Heart left ventricle (tissue), 16 donors: ENCODE measurements at regions of chr21 and their contacts with region 1.

Region 1: GRCh38 chr21:35051287-35051818 is 2.3 kb upstream of the RUNX1 start:
- DNase-seq: peak; percentile 82 to 91 (median 86)
- ATAC-seq: peak; percentile 86 to 94 (median 91)
- H3K4me3 ChIP-seq: no peak overlapping the region
- H3K27ac ChIP-seq: peak overlapping the region in 7 of 12 donors; percentile 13 to 76 (median 37)
- H3K4me1 ChIP-seq: peaks cover 0 to 47% (median 12%) of the 10 kb centered on the region in 12 donors
- H3K27me3 ChIP-seq: peaks cover 0 to under 1% (median 0%) of the 10 kb centered on the region in 9 donors
- CTCF ChIP-seq: peak in 11 of 12 donors; percentile 43 to 71 (median 60)
- POLR2A ChIP-seq: no peak

Region 2: DNA sequence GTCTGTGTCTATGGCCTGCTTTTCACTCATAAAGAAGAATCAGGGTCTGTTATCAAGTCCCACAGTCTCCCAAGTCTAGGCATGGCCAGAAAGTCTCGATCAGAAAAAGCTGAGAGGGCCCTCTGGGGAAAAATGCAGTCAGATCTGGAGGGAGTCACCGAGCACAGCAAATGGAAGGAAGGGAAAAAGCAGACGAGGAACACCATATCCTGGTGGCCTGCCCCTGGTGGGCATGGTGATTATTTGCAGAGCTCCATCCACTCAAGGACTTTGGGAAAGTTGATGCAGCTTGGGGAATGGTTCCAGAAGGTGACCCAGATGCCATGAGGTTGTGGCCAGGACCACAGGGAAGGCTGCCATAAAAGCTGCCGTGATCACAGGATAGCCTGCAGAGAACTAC is 193.5 kb before region 1 on chr21:
- intact Hi-C with region 1: no loop called
- DNase-seq: no peak
- ATAC-seq: no peak
- H3K4me3 ChIP-seq: no peak overlapping the region
- H3K27ac ChIP-seq: no peak overlapping the region
- H3K4me1 ChIP-seq: peaks cover 0 to 19% (median 0%) of the 10 kb centered on the region in 12 donors
- H3K27me3 ChIP-seq: peaks cover 0 to 8% (median 0%) of the 10 kb centered on the region in 9 donors
- CTCF ChIP-seq: no peak
- POLR2A ChIP-seq: no peak

Region 3: GRCh38 chr21:35138665-35139381 is 87.5 kb after region 1 on chr21:
- intact Hi-C with region 1: no loop called
- DNase-seq: no peak
- ATAC-seq: peak in 1 of 4 donors; percentile 39
- H3K4me3 ChIP-seq: no peak overlapping the region
- H3K27ac ChIP-seq: no peak overlapping the region
- H3K4me1 ChIP-seq: peaks cover 0 to 11% (median 0%) of the 10 kb centered on the region in 12 donors
- H3K27me3 ChIP-seq: peaks cover 0 to 4% (median 0%) of the 10 kb centered on the region in 9 donors
- CTCF ChIP-seq: no peak
- POLR2A ChIP-seq: no peak

Region 4: DNA sequence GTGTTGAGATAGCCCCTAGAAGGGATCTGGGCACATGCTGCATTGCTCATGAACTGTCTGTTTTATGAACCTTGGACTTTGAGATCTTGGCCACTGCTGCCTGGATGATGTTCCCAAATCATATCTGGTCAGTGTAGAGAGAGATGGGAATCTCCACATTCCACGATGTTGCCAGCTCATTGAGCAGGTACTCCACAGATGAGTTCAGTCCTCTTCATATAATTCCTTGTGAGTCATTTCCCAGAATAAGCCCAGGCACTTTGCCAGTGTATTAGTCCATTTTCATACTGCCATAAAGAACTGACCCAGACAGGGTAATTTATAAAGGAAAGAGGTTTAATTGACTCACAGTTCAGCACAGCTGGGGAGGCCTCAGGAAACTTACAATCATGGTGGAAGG is 251.7 kb after region 1 on chr21:
- intact Hi-C with region 1: no loop called
- DNase-seq: no peak
- ATAC-seq: peak in 1 of 4 donors; percentile 38
- H3K4me3 ChIP-seq: no peak overlapping the region
- H3K27ac ChIP-seq: no peak overlapping the region
- H3K4me1 ChIP-seq: peaks cover 0 to 20% (median 0%) of the 10 kb centered on the region in 12 donors
- H3K27me3 ChIP-seq: peaks cover 0 to 5% (median 0%) of the 10 kb centered on the region in 9 donors
- CTCF ChIP-seq: no peak
- POLR2A ChIP-seq: no peak

Region 5: DNA sequence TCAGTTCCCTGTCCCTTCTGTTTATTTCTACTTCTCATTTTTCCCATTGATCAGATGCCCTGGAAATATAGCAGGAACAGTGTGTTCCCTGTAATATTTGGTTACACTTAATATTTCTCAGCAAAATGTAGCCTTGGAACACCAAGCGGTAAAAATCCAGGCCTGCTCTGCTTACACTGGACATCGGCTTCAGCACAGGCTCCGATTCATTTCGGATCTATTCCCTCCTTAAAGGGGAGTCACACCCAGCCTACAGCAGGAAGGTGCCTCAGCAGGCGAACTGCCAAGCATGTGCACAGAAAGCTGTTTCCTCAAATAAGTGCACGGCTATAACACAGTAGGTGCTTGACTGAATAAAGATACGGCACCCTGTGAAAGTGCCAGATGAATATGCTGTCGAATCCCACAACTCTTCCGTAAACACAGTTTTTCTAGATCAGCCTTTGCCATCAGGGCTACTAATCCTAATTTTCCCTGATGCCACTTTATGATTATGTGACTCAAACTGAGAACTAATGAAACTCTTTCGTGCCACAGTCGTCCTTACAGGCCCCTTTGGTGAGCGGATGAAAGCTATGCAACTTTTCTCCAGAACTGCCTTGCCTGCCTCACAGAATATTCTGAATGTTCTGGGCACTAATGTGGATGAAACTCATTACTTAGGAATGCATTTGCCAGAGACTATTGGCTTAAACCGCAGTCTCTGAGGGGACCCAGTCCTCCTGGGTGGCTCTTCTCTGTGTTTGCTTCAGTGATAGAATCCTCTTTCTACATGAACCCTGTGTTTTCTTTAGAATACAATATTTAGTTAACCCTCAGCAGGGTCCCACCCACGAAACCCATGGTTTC is 273.2 kb after region 1 on chr21:
- intact Hi-C with region 1: no loop called
- DNase-seq: no peak
- ATAC-seq: peak; percentile 47 to 67 (median 52)
- H3K4me3 ChIP-seq: no peak overlapping the region
- H3K27ac ChIP-seq: peak overlapping the region in 10 of 12 donors; percentile 15 to 82 (median 44)
- H3K4me1 ChIP-seq: peaks cover 0 to 22% (median 0%) of the 10 kb centered on the region in 12 donors
- H3K27me3 ChIP-seq: peaks cover 0 to 6% (median 0%) of the 10 kb centered on the region in 9 donors
- CTCF ChIP-seq: no peak
- POLR2A ChIP-seq: no peak

Region 6: GRCh38 chr21:35840197-35840799 is 788.9 kb after region 1 on chr21:
- intact Hi-C with region 1: loop called in 4 of 10 experiments (anchors 5 to 10 kb)
- DNase-seq: peak in 4 of 5 donors; percentile 48 to 64 (median 56)
- ATAC-seq: peak in 3 of 4 donors; percentile 51 to 62 (median 58)
- H3K4me3 ChIP-seq: no peak overlapping the region
- H3K27ac ChIP-seq: no peak overlapping the region
- H3K4me1 ChIP-seq: peaks cover 0 to 7% (median 0%) of the 10 kb centered on the region in 12 donors
- H3K27me3 ChIP-seq: no peaks in the 10 kb centered on the region
- CTCF ChIP-seq: peak; percentile 62 to 87 (median 82)
- POLR2A ChIP-seq: no peak

Region 7: DNA sequence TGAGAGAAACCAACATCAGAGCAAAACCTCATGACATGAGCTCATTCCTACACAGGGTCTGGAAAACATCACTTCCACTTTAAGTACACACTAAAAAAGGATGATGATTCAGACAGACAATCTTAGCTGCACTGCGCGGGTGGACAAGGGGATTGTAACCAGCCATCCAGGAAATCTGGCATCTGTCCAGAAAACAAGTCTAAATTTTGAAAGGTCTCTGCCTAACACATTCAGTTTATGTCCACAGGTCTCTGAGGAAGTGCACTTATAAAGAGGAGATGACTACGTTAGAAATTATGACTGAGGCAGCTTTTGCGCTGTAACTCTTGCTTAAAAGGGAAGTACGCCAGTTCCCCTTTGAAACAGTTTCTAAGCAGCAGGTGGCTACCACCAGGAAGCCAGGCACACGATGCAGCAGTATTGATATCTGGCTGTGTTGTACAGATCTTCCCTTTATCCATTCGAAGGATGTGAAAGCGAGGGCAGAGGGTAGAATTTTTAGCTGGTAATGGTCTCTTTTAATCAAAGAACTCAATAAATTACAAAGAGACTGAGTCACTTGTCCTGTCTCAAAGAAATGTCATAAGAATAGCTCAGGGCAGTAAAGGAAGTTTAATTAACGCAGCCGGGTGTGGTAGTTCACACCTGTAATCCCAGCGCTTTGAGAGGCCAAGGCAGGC is 881.0 kb after region 1 on chr21:
- intact Hi-C with region 1: loop called in 1 of 10 experiments (anchors 10 kb)
- DNase-seq: peak; percentile 70 to 86 (median 78)
- ATAC-seq: peak; percentile 90 to 97 (median 96)
- H3K4me3 ChIP-seq: peak overlapping the region in 1 of 12 donors; percentile 25
- H3K27ac ChIP-seq: peak overlapping the region; percentile 11 to 91 (median 77)
- H3K4me1 ChIP-seq: peaks cover 0 to 33% (median 22%) of the 10 kb centered on the region in 12 donors
- H3K27me3 ChIP-seq: no peaks in the 10 kb centered on the region
- CTCF ChIP-seq: no peak
- POLR2A ChIP-seq: no peak